ENCODE measurements at regions of chr12 and their contacts with region 1.

Region 1: DNA sequence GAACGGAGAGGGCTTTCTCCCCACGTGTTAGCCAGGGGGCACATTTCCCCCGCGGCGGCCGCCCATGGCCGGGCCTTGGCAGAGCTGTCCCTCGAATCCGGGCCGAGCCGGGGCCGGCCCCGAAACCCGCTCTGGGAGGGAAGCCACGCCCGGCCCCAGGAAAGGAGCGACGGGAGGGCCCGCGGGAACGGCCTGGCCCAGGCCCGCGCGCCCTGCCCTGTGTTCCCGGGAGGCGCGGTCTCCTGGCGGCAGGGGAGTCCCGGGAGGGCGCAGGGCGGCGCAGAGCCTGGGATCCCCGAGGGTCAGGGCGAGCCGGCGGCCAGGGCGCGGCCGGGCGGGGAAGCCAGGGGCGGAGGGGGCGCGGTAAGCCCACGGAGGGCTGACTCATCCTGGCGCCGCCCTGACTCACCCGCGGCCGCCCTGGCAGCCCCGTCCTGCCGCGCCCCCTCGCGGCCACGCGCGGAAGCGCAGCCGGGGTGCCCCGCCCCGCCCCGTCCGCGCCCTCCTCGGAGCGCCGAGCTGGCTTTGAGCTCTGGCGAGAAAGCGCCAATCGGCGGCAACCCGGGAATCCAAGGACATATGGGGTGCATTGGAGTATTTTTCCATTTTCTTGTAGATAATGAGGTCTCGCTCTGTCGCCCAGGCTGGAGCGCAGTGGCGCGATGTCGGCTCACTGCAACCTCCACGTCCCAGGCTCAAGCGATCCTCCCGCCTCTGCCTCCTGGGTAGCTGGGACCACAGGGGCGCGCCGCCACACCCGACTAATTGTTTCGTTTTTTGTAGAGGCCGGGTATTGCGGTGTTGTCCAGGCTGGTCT is 31.8 kb upstream of the PLEKHG6 start:
- DNase-seq: peak; percentile 81 to 83
- H3K4me3 ChIP-seq: peak overlapping the region; percentile 49 to 79 (median 59)
- H3K27ac ChIP-seq: peak overlapping the region; percentile 94 to 99
- H3K4me1 ChIP-seq: peaks cover 9 to 20% of the 10 kb centered on the region in 2 donors
- H3K27me3 ChIP-seq: no peaks in the 10 kb centered on the region
- CTCF ChIP-seq: peak; percentile 44 to 99 (median 50)
- POLR2A ChIP-seq: no peak

Region 2: GRCh38 chr12:5022465-5023061 is 1256.1 kb before region 1 on chr12:
- intact Hi-C with region 1: no loop called
- DNase-seq: peak in 1 of 2 donors; percentile 24
- H3K4me3 ChIP-seq: no peak overlapping the region
- H3K27ac ChIP-seq: no peak overlapping the region
- H3K4me1 ChIP-seq: no peaks in the 10 kb centered on the region
- H3K27me3 ChIP-seq: peaks cover 0 to 2% of the 10 kb centered on the region in 2 donors
- CTCF ChIP-seq: peak; percentile 33 to 82 (median 78)
- POLR2A ChIP-seq: no peak

Region 3: DNA sequence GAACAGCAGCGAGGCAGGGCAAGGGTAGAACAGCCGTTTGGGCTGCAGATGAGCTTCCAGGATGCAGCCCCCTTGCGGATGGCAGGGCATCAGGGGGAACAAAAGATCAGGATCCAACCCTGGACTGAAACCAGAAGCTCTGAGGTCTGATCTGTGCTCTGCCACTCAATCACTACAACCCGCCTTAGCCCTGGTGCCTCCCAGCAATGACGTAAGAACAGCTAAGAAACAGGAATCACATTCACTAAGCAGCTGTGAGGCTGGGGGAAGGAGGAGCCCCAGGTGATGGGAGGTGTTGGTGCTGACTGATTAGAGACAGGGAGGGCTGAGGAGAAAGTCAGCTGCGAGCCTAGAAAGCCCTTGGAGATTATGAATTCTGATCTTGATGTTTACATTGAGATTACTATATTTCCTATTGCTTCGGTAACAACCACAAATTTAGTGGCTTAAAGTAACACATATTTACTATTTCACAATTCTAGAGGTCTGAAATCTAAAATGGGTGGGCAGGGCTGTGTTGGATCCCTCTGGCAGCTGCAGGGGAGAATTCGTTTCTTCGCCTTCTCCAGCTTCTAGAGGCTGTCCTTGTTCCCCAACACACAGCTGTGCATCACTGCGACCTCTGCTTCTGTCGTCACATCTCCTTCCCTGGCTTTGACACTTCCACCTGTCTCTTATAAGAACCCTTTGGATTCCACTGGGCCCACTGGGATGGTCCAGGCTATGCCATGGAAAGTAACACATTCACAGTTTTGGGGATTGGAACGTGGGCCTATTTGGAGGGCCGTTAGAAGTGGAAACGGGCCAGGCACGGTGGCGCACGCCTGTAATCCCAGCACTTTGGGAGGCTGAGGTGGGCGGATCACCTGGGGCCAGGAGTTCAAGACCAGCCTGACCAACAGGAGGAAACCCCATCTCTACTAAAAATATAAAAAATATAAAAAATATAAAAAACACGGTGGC is 84.5 kb before region 1 on chr12:
- intact Hi-C with region 1: loop called (anchors 5 kb)
- DNase-seq: no peak
- H3K4me3 ChIP-seq: no peak overlapping the region
- H3K27ac ChIP-seq: no peak overlapping the region
- H3K4me1 ChIP-seq: no peaks in the 10 kb centered on the region
- H3K27me3 ChIP-seq: no peaks in the 10 kb centered on the region
- CTCF ChIP-seq: no peak
- POLR2A ChIP-seq: no peak